Gastrocnemius medialis (tissue), 4 donors: ENCODE measurements at regions of chr7 and their contacts with region 1.

Region 1: DNA sequence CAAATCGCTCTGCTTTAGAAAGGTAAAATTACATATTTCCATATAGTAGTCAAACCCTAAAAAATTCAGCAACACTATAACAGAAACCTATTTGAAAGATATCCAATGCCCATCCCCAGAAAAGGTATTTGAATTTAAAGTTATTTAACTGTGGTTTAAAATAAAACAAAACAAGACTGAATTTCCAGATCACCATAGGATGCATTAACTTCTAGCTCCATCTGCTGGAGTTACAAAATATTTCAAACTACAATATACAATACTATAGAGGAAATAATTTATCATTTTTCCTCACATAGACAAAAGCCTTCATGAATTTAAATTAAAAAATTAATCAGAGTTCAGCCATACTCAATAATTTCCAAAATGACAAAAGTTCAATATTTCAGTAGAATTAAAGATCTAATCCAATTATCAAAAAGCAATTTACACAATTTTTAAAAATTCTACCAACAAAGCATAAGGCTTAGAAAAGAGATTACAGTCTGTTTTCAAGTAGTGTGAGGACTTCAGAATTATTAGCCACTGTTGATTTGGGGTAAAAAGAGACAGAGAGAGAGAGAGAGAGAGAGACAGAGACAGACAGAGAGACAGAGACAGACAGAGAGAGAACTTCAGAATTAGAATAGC is 75.9 kb downstream of the LMBR1 start:
- DNase-seq: no peak
- ATAC-seq: no peak
- H3K4me3 ChIP-seq: no peak overlapping the region
- H3K27ac ChIP-seq: no peak overlapping the region
- H3K4me1 ChIP-seq: no peaks in the 10 kb centered on the region
- H3K27me3 ChIP-seq: no peaks in the 10 kb centered on the region
- CTCF ChIP-seq: peak in 1 of 5 experiments; percentile 7
- POLR2A ChIP-seq: no peak

Region 2: DNA sequence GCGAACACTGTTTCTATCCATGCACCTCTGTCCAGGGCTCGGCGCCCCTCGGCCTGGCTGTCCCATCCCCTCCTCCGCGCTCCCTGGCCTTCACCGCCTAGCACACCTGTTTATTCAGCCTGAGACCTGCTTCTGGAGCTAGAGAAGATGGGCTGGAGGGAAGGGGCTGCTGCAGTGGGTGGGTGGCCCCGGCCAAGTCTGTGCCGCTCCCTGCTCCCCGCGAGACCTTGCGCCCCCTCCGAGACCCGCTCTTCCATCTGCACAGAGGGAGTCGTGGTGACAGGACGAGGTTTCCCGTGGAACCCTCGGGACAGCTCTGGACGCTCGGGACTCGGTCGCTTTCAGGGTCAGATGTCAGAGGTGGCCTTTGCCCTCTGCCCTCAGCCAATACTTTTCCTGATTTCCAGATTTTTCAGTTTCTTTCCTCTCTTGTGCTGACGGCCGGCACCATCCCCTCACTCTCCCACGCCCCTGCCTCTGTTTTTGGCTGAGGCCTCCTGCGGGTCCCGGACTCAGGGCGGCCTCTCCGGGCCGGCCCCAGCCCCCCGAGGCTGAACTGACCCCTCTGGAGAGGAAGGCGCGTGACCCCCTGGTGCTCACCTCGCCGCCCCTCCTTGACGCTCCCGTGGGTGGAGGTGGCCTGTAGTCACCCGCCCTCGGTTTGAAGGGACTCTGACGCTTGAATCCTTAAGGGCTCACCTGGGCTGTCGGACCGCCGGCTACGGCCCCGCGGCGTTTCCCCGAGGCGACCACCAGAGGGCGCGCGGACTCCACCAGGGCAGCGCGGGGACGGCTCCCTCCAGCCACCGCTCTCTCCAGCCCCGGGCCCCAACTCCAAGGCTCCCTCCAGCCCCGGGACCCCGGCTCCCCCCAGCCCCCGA is 1020.4 kb before region 1 on chr7:
- in situ Hi-C with region 1: no loop called
- intact Hi-C with region 1: loop called (anchors 5 kb)
- DNase-seq: peak in 1 of 2 donors; percentile 20
- ATAC-seq: peak; percentile 58 to 65
- H3K4me3 ChIP-seq: no peak overlapping the region
- H3K27ac ChIP-seq: no peak overlapping the region
- H3K4me1 ChIP-seq: peaks cover 0 to 4% of the 10 kb centered on the region in 2 donors
- H3K27me3 ChIP-seq: peaks cover 23 to 30% (median 27%) of the 10 kb centered on the region in 3 donors
- CTCF ChIP-seq: peak; percentile 23 to 90 (median 78)
- POLR2A ChIP-seq: no peak

Region 3: DNA sequence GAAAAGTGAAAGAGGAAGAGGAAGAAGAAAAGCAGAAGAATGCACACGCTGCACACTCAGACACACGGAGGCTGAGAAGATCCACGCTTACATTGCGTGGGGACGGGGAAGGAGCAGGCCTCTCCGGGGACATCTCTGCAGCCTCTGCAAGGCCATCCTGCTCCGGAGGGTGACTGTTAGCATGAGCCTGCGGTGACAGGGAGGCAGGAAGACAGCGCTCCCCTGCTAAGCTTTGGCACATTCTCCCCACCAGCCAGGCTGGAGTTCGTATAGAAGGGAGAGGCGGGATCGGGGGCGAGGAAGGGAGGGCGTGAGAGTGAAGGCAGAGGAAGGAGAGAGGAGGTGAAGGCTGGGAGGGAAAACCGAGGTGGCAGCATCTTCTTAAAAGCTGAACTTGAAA is 638.8 kb before region 1 on chr7:
- in situ Hi-C with region 1: no loop called
- intact Hi-C with region 1: no loop called
- DNase-seq: no peak
- ATAC-seq: no peak
- H3K4me3 ChIP-seq: no peak overlapping the region
- H3K27ac ChIP-seq: no peak overlapping the region
- H3K4me1 ChIP-seq: no peaks in the 10 kb centered on the region
- H3K27me3 ChIP-seq: no peaks in the 10 kb centered on the region
- CTCF ChIP-seq: no peak
- POLR2A ChIP-seq: no peak

Region 4: GRCh38 chr7:157228864-157229422 is 411.9 kb after region 1 on chr7:
- in situ Hi-C with region 1: no loop called
- intact Hi-C with region 1: no loop called
- DNase-seq: no peak
- ATAC-seq: no peak
- H3K4me3 ChIP-seq: no peak overlapping the region
- H3K27ac ChIP-seq: no peak overlapping the region
- H3K4me1 ChIP-seq: no peaks in the 10 kb centered on the region
- H3K27me3 ChIP-seq: no peaks in the 10 kb centered on the region
- CTCF ChIP-seq: no peak
- POLR2A ChIP-seq: no peak